Transverse colon (tissue), 4 donors: ENCODE measurements at regions of chr15 and their contacts with region 1.

Region 1: GRCh38 chr15:100029868-100030479 is 296.7 kb upstream of the LYSMD4 start:
- DNase-seq: no peak
- H3K4me3 ChIP-seq: no peak overlapping the region
- H3K27ac ChIP-seq: no peak overlapping the region
- H3K4me1 ChIP-seq: no peaks in the 10 kb centered on the region
- H3K27me3 ChIP-seq: no peaks in the 10 kb centered on the region
- CTCF ChIP-seq: no peak
- EP300 ChIP-seq: no peak
- POLR2A ChIP-seq: no peak

Region 2: DNA sequence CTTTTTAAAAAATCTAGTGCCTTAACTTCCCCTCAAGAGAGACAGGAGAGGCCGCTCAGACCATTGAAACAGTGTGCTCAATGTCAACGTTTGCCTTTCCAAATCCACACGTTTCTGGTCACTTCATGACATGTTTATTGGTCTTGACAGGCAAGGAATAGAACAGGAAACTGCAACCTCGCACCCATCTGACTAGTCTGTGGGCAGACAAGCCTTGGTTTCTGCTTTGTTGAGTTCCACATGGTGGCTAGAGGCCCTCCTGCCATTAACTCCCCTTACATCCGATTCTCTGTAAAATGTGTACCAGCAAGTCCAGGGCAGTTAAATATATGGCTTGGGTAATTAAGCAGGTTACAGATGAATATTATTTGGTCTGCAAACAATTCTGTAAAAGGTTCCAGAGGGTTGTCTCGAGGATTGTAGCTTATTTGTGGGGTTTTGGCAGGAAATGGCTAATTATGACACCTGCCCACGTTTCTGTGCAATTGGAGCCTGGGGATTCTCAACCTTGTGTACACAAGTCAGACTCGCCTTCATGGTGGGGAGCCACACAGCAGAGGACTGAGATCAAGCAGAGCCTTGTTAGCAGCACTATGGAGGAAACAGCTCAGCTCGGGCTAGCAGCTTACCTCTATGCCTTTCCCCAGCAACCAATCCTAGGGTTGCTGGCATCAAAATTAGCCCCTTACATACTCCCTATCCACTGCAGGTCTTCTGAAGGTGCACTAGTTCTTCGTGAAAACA is 1699.1 kb before region 1 on chr15:
- in situ Hi-C with region 1: no loop called
- intact Hi-C with region 1: loop called (anchors 5 kb)
- DNase-seq: no peak
- H3K4me3 ChIP-seq: no peak overlapping the region
- H3K27ac ChIP-seq: no peak overlapping the region
- H3K4me1 ChIP-seq: no peaks in the 10 kb centered on the region
- H3K27me3 ChIP-seq: no peaks in the 10 kb centered on the region
- CTCF ChIP-seq: no peak
- EP300 ChIP-seq: no peak
- POLR2A ChIP-seq: no peak

Region 3: GRCh38 chr15:99911816-99912215 is 118.2 kb before region 1 on chr15:
- in situ Hi-C with region 1: no loop called
- intact Hi-C with region 1: no loop called
- DNase-seq: no peak
- H3K4me3 ChIP-seq: no peak overlapping the region
- H3K27ac ChIP-seq: no peak overlapping the region
- H3K4me1 ChIP-seq: no peaks in the 10 kb centered on the region
- H3K27me3 ChIP-seq: no peaks in the 10 kb centered on the region
- CTCF ChIP-seq: no peak
- EP300 ChIP-seq: no peak
- POLR2A ChIP-seq: no peak